Motor neuron (in vitro differentiated cells): ENCODE measurements at regions of chr2 and their contacts with region 1.

Region 1: GRCh38 chr2:31333527-31334183 is 80.9 kb downstream of the XDH start:
- ATAC-seq: peak; percentile 71 to 92 (median 85)
- H3K4me3 ChIP-seq: no peak overlapping the region
- H3K27ac ChIP-seq: no peak overlapping the region
- H3K4me1 ChIP-seq: no peaks in the 10 kb centered on the region

Region 2: DNA sequence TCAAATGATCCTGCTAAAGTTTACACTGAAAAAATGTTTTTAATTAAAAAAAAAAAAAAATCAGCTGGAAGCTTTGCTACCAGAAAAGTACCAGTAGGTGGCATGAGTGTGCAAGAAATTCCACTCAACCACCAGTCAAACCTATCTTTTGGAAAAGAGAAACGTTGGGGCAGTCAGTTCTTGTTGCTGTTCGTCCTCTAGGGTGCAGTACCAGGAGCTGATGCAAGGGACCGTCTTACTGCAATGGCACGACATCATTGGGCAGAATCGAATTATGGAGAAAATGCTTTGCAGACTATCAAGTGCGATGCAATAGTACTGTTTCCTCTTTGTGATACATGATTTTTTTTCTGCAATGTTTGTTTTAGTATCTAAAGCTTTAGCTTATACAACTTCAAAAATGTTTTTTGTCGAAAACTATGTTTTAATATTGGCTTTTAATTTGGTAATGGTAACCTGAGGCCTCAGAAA is 1168.6 kb before region 1 on chr2:
- in situ Hi-C with region 1: loop called in 1 of 9 experiments (anchors 25 kb)
- ATAC-seq: peak; percentile 81 to 99 (median 94)
- H3K4me3 ChIP-seq: no peak overlapping the region
- H3K27ac ChIP-seq: no peak overlapping the region
- H3K4me1 ChIP-seq: peaks cover 0 to 2% of the 10 kb centered on the region in 2 donors

Region 3: GRCh38 chr2:30178618-30179434 is 1154.8 kb before region 1 on chr2:
- in situ Hi-C with region 1: loop called in 2 of 9 experiments (anchors 25 kb)
- ATAC-seq: peak in 3 of 8 experiments; percentile 66 to 97 (median 96)
- H3K4me3 ChIP-seq: no peak overlapping the region
- H3K27ac ChIP-seq: no peak overlapping the region
- H3K4me1 ChIP-seq: no peaks in the 10 kb centered on the region

Region 4: DNA sequence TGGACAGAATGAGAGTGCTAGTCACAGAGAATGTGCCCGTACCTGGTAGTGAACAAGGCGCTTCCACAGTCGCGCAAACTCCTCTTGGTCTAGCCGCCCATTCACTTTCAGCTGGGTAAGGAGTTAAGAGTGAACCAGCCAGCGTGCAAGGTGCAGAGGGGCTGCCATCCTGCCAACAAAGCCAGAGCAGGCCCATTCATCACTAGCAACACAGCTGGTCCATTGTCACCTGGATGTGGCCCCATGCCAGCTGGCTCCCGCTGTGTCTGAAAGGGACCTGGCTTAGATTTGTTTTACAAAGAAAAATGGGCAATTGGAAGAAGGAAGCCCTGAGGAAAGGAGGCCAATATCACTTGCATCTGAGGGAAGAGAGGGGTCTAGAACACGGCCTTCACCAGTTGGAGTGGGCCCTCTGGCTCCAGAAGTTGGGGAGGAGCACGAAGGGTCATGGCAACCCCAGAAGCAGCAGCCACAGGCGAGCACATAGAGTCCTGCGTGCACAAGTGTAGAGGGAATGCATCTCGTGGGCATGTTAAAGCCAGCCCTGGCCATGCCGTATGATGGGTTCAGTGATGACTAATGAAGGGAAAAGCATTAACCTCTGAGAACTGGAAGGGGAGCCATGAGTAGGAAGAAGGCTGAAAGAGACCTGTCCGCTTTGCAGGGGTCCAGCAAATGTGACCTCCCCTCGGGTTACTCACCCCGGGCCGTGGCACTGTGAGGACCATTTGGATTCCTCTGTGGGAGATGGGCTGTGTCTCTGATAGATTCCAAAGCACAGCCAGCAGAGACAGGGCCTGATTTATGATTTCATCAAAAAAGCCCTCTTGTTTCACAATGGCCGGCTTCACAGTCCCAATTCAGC is 597.0 kb before region 1 on chr2:
- in situ Hi-C with region 1: loop called in 2 of 9 experiments (anchors 25 kb)
- ATAC-seq: peak in 1 of 8 experiments; percentile 30
- H3K4me3 ChIP-seq: no peak overlapping the region
- H3K27ac ChIP-seq: no peak overlapping the region
- H3K4me1 ChIP-seq: no peaks in the 10 kb centered on the region

Region 5: GRCh38 chr2:30894498-30895119 is 439.0 kb before region 1 on chr2:
- in situ Hi-C with region 1: no loop called
- ATAC-seq: peak in 2 of 8 experiments; percentile 58 to 62
- H3K4me3 ChIP-seq: no peak overlapping the region
- H3K27ac ChIP-seq: no peak overlapping the region
- H3K4me1 ChIP-seq: peaks cover 0 to 3% of the 10 kb centered on the region in 2 donors